ENCODE measurements at regions of chr7 and their contacts with region 1.

Region 1: GRCh38 chr7:72163271-72163670 is 248.9 kb downstream of the CALN1 start:
- DNase-seq: no peak
- H3K4me3 ChIP-seq: no peak overlapping the region
- H3K27ac ChIP-seq: no peak overlapping the region
- H3K4me1 ChIP-seq: no peaks in the 10 kb centered on the region
- H3K27me3 ChIP-seq: no peaks in the 10 kb centered on the region
- CTCF ChIP-seq: no peak
- POLR2A ChIP-seq: no peak

Region 2: DNA sequence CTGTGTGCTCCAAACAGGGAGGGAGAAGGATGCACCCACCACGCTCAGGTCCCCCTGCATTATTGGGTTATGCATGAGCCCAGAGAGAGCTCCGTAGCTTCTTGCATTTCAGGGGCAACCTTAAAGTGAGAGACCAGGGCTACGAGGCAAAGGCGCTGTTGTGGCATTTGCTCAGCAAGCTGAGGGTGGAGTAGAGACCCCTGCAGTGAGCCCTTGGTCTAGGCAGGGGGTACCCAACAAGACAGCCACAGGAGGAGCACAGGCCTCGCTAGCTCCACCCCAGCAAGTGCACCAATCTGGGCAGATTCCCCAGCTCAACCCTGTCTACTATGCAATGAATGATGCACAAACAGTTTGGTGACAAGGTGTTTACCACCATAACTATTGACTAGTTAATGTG is 50.5 kb after region 1 on chr7:
- CTCF ChIA-PET with region 1: no interaction called
- POLR2A ChIA-PET with region 1: no interaction called
- dilution Hi-C with region 1: no loop called
- intact Hi-C with region 1: loop called (anchors 2 kb)
- DNase-seq: no peak
- H3K4me3 ChIP-seq: no peak overlapping the region
- H3K27ac ChIP-seq: no peak overlapping the region
- H3K4me1 ChIP-seq: no peaks in the 10 kb centered on the region
- H3K27me3 ChIP-seq: no peaks in the 10 kb centered on the region
- CTCF ChIP-seq: no peak
- POLR2A ChIP-seq: no peak